GM12878 (cell line): ENCODE measurements at regions of chr10 and their contacts with region 1.

Region 1: GRCh38 chr10:86585037-86585725 is 63.6 kb upstream of the WAPL start:
- DNase-seq: peak; percentile 38
- ATAC-seq: peak; percentile 99
- H3K4me3 ChIP-seq: no peak overlapping the region
- H3K27ac ChIP-seq: no peak overlapping the region
- H3K4me1 ChIP-seq: no peaks in the 10 kb centered on the region
- H3K27me3 ChIP-seq: no peaks in the 10 kb centered on the region
- CTCF ChIP-seq: peak; percentile 92 to 96 (median 94)
- EP300 ChIP-seq: no peak
- POLR2A ChIP-seq: no peak
- RAD21 ChIP-seq: peak; percentile 98

Region 2: DNA sequence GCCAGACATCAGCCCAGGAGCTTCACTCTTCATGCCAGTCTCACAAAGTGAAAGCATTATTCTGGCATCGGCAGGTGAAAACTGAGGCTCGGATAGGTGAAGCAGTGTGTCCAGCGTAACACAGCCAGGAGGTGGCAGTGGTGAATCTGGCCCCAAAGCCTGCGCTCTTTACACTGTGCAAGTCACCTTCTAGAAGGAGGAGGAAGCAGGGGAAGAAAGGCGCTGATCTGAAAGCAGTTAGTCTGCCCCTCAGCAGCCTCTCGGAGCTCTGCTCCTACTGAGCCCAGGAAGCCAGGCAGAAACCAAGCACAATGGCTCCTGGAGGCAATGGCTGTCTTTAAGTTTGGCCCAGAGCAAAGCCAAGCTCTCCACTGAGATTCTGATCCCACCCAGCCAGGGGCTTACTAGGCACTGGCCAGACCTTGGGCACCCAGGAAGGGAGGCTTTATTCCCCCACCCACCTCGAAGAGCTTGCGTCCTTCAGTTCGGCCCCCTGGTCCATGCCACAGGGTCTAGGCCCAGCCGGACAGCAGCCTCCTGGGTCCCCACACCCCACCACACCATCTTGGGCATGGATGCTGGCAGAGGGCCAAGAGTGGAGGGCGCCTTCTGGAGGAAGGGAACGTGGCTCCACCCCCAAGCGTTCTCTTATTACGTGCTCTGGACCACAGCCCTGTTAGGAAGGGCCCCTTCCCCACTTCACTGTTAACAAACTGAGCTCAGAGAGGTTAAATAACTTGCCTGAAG is 323.1 kb before region 1 on chr10:
- CTCF ChIA-PET with region 1: interaction called, 3 read pairs
- POLR2A ChIA-PET with region 1: no interaction called
- RAD21 ChIA-PET with region 1: interaction called, 6 read pairs
- SMC1A ChIA-PET with region 1: no interaction called
- in situ Hi-C with region 1: no loop called
- intact Hi-C with region 1: loop called (anchors 5 kb)
- DNase-seq: peak; percentile 21
- ATAC-seq: peak; percentile 95
- H3K4me3 ChIP-seq: no peak overlapping the region
- H3K27ac ChIP-seq: no peak overlapping the region
- H3K4me1 ChIP-seq: no peaks in the 10 kb centered on the region
- H3K27me3 ChIP-seq: peaks cover 0 to 2% of the 10 kb centered on the region in 2 experiments; a peak in 2 of 4 replicates
- CTCF ChIP-seq: peak; percentile 53 to 57 (median 55); a peak in 5 of 6 replicates
- EP300 ChIP-seq: no peak
- POLR2A ChIP-seq: no peak
- RAD21 ChIP-seq: peak; percentile 41

Region 3: DNA sequence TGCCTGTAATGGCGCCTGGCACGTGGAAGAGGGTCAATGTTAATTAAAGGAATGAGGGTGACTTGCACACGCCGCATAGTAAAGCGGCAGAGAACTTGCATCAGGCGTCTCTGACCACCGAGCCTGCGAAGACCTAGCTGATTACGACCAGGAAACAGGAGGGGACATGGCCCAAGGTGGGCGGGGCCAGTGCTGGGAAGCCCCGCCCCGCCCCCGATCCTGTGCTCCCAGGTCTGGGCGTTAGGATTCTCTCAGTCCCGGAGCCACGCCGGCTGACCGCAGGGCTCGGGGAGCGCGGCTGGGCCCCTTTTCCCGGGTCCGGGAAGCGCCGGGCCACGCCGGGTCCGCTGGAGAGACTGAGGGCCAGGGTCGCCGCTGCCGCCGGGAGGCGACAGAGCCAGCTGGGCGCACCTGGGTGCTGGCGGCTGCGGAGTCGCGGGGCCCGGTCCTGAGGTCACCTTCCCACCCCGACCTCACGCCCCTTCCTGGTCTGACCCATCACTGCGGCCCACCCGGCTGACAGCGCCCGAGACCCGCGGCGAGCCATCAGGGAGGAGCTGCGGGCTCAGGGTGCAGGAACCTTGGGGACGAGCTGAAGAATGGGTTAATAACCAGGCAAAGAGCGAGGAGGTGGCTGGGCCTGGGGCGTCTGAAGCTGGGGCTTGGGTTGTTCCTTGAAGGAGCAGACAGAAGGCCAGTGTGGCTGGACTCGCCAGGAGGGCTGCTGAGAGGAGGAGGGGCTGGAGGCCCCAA is 195.6 kb before region 1 on chr10:
- CTCF ChIA-PET with region 1: interaction called, 74 read pairs
- POLR2A ChIA-PET with region 1: interaction called, 4 read pairs
- RAD21 ChIA-PET with region 1: interaction called, 36 read pairs
- SMC1A ChIA-PET with region 1: interaction called, 42 read pairs
- in situ Hi-C with region 1: no loop called
- intact Hi-C with region 1: no loop called
- DNase-seq: no peak
- ATAC-seq: peak; percentile 85
- H3K4me3 ChIP-seq: peak overlapping the region; percentile 87
- H3K27ac ChIP-seq: peak overlapping the region; percentile 91
- H3K4me1 ChIP-seq: peaks cover 36% of the 10 kb centered on the region
- H3K27me3 ChIP-seq: no peaks in the 10 kb centered on the region
- CTCF ChIP-seq: peak; percentile 21 to 40 (median 21); a peak in 3 of 6 replicates
- EP300 ChIP-seq: no peak
- POLR2A ChIP-seq: peak; percentile 71
- RAD21 ChIP-seq: no peak

Region 4: GRCh38 chr10:86472061-86472460 is 113.1 kb before region 1 on chr10:
- CTCF ChIA-PET with region 1: interaction called, 8 read pairs
- POLR2A ChIA-PET with region 1: no interaction called
- RAD21 ChIA-PET with region 1: no interaction called
- SMC1A ChIA-PET with region 1: no interaction called
- in situ Hi-C with region 1: no loop called
- intact Hi-C with region 1: loop called (anchors 10 kb)
- DNase-seq: no peak
- ATAC-seq: no peak
- H3K4me3 ChIP-seq: no peak overlapping the region
- H3K27ac ChIP-seq: no peak overlapping the region
- H3K4me1 ChIP-seq: no peaks in the 10 kb centered on the region
- H3K27me3 ChIP-seq: no peaks in the 10 kb centered on the region
- CTCF ChIP-seq: no peak
- EP300 ChIP-seq: no peak
- POLR2A ChIP-seq: no peak
- RAD21 ChIP-seq: no peak